Activated naive CD4-positive, alpha-beta T cell treated with anti-CD3 and anti-CD28 coated beads for 36 hours (primary cell): ENCODE measurements at regions of chr3 and their contacts with region 1.

Region 1: GRCh38 chr3:45665101-45665572 is 24.1 kb upstream of the SACM1L start:
- DNase-seq: peak; percentile 82
- H3K4me3 Mint-ChIP-seq: peak overlapping the region; percentile 84
- H3K27ac Mint-ChIP-seq: peak overlapping the region; percentile 88
- H3K4me1 Mint-ChIP-seq: peaks cover 52% of the 10 kb centered on the region
- H3K27me3 Mint-ChIP-seq: no peaks in the 10 kb centered on the region

Region 2: DNA sequence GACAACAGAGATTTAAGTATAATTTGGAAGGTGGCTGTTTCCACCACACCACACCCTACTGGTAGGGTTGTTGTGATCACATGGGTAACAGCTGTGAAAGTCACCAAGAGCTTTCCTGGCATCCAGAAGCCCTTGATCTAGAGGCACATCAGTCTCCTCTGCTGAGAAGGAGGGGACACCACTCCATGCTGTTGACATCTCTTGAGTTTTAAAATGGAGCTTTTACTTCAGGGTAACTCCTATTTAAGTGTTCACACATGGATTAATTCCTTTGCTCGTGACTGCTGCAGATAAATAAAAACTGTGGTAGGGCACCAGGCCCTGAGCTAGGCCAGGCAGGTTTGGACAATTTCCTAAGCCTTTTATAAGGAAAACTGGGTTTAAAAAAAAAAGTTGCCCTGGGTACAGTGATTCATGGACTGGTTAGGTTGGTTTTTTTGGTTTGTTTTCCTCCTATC is 681.6 kb before region 1 on chr3:
- CTCF ChIA-PET with region 1: no interaction called
- intact Hi-C with region 1: loop called (anchors 5 kb)
- DNase-seq: no peak
- H3K4me3 Mint-ChIP-seq: no peak overlapping the region
- H3K27ac Mint-ChIP-seq: no peak overlapping the region
- H3K4me1 Mint-ChIP-seq: peaks cover 78% of the 10 kb centered on the region
- H3K27me3 Mint-ChIP-seq: no peaks in the 10 kb centered on the region

Region 3: GRCh38 chr3:45167011-45167911 is 497.9 kb before region 1 on chr3:
- CTCF ChIA-PET with region 1: no interaction called
- intact Hi-C with region 1: loop called (anchors 5 kb)
- DNase-seq: peak; percentile 95
- H3K4me3 Mint-ChIP-seq: peak overlapping the region; percentile 55
- H3K27ac Mint-ChIP-seq: peak overlapping the region; percentile 88
- H3K4me1 Mint-ChIP-seq: peaks cover 19% of the 10 kb centered on the region
- H3K27me3 Mint-ChIP-seq: no peaks in the 10 kb centered on the region

Region 4: DNA sequence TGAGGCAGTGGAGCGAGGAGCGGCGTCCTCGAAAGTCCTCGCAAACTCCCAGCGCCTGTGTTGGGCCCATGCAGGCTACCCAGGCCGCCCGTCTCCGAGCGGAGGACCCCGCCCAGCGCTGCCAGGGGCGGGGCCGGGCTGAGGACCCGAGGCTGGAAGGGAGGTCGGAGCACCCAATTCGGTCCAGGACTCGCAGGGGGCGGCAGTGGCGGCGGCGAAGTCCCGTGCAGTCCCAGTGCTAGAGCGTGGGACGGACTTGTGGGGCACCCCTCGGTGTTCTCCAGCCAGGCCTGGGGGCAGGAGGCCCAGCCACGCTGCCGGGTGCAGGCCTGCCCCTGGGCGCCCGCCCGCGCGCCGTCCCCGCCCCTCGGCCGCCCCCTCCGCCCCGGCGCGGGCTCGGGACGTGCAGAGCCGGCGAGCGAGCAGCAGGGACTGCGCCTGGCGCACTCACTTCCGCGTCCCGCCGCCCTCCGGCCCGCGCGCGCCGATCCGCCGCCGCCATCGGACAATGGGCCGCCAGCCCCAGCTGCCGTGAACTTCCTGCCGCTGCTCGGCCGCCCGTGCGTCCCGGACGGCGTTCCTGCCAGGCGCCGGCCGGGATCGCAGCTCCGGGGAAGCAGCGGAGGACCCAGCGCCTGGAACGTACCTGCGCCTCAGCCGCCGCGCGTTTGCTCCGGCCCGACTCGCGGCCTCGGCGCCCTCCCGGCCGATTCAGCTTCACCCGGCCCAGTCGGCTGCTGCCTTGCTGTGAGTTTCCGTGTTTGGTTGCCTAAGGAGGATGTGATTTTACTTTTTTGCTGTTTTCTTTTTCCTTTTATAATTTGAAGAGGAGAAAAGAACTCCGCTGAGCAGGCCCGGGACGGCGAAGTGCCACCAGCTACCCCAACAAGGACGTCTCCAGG is 71.2 kb before region 1 on chr3:
- CTCF ChIA-PET with region 1: interaction called, 29 read pairs
- intact Hi-C with region 1: loop called (anchors 2 kb)
- DNase-seq: peak; percentile 61
- H3K4me3 Mint-ChIP-seq: peak overlapping the region; percentile 80
- H3K27ac Mint-ChIP-seq: peak overlapping the region; percentile 84
- H3K4me1 Mint-ChIP-seq: peaks cover 48% of the 10 kb centered on the region
- H3K27me3 Mint-ChIP-seq: no peaks in the 10 kb centered on the region

Region 5: GRCh38 chr3:45832691-45833090 is 167.6 kb after region 1 on chr3:
- CTCF ChIA-PET with region 1: interaction called, 3 read pairs
- intact Hi-C with region 1: loop called (anchors 2 kb)
- DNase-seq: peak; percentile 30
- H3K4me3 Mint-ChIP-seq: no peak overlapping the region
- H3K27ac Mint-ChIP-seq: no peak overlapping the region
- H3K4me1 Mint-ChIP-seq: peaks cover 3% of the 10 kb centered on the region
- H3K27me3 Mint-ChIP-seq: no peaks in the 10 kb centered on the region

Region 6: GRCh38 chr3:45929042-45929679 is 264.0 kb after region 1 on chr3:
- CTCF ChIA-PET with region 1: no interaction called
- intact Hi-C with region 1: loop called (anchors 2 kb)
- DNase-seq: peak; percentile 76
- H3K4me3 Mint-ChIP-seq: no peak overlapping the region
- H3K27ac Mint-ChIP-seq: no peak overlapping the region
- H3K4me1 Mint-ChIP-seq: no peaks in the 10 kb centered on the region
- H3K27me3 Mint-ChIP-seq: no peaks in the 10 kb centered on the region